IMR-90 (cell line): ENCODE measurements at regions of chr19 and their contacts with region 1.

Region 1: DNA sequence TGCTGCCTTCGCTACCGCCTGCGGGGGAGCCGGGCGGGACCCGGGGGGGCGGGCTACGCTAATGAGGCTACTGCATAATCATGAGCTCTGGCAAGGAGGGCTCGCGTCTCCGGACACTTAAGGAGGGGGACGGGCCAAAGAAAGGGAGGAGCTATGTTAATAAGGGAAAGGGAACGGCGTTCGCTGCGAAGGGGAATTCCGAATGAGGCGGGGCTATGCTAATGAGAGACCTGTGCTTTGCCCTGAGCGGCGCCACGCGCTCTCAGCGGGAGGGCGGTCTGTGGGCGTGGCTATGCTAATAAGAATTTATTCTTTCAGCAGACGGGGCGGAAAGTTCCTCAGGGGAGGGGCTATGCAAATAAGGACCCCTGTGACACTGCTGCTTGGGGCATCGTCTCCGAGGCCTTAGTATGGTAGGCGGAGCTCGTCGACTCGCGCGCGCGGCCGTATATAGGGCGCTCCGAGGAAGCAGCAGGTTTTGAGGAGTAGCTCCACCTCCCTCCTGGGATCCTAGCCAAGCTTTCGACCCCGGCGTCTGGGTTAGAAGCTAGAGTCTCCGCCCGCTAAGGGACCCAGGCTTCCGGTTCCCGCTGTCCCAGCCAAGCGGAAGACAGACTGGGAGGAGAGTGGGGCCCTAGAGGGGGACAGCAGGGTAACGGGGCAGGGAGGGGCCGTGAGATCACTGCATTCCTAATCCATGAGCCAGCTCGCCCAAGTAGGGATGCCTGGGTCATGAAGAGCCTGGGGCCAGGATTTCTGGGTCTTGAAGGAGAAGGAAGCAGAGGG is at the start of gene RRAS:
- DNase-seq: peak; percentile 100
- ATAC-seq: peak; percentile 69
- H3K4me3 ChIP-seq: peak within 1 kb of the TSS; percentile 65
- H3K27ac ChIP-seq: peak within 1 kb of the TSS; percentile 99
- H3K4me1 ChIP-seq: peaks cover 7% of the 10 kb centered on the region
- H3K27me3 ChIP-seq: no peaks in the 10 kb centered on the region
- CTCF ChIP-seq: no peak
- POLR2A ChIP-seq: no peak; the same call in none of the 2 replicates
- RAD21 ChIP-seq: no peak
- total RNA-seq, gene RRAS: 50.2 and 50.5 TPM in 2 replicates

Region 2: DNA sequence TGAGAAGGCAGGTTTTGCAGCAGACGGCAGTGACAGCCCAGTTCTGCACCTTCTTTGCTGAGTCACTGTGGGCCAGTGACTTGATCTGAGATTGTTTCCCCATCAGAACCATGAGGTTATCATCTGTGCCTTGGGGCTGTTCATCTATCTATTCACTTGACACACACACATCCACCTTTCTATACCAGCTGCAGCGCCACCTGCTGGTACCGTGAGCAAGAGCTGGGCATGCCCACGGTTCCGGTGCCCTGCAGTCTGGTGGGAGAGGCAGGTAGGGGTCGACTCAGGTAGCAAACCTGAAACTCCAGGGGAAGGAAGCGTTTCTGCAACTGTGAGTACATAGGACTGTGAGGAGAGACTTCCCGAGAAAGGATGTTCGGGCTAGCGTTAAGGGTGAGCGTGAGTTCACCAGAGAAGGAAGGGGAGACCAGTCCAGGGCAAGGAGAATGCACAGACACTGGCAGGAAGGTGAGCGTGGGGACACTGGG is 533.6 kb before region 1 on chr19:
- CTCF ChIA-PET with region 1: no interaction called
- POLR2A ChIA-PET with region 1: no interaction called
- dilution Hi-C with region 1: no loop called
- in situ Hi-C with region 1: no loop called
- intact Hi-C with region 1: no loop called
- DNase-seq: peak; percentile 45
- ATAC-seq: peak; percentile 57; the same call in 1 of the 2 replicates
- H3K4me3 ChIP-seq: no peak overlapping the region
- H3K27ac ChIP-seq: no peak overlapping the region
- H3K4me1 ChIP-seq: no peaks in the 10 kb centered on the region
- H3K27me3 ChIP-seq: no peaks in the 10 kb centered on the region
- CTCF ChIP-seq: peak; percentile 67
- POLR2A ChIP-seq: no peak
- RAD21 ChIP-seq: peak; percentile 33

Region 3: GRCh38 chr19:49590071-49590970 is 50.0 kb before region 1 on chr19:
- CTCF ChIA-PET with region 1: no interaction called
- POLR2A ChIA-PET with region 1: interaction called, 9 read pairs
- dilution Hi-C with region 1: no loop called
- in situ Hi-C with region 1: no loop called
- intact Hi-C with region 1: loop called (anchors 2 kb)
- DNase-seq: peak; percentile 95
- ATAC-seq: peak; percentile 85
- H3K4me3 ChIP-seq: peak overlapping the region; percentile 97
- H3K27ac ChIP-seq: peak overlapping the region; percentile 91
- H3K4me1 ChIP-seq: peaks cover 7% of the 10 kb centered on the region; the same call in 1 of the 2 replicates
- H3K27me3 ChIP-seq: no peaks in the 10 kb centered on the region
- CTCF ChIP-seq: peak; percentile 10; the same call in 1 of the 2 replicates
- POLR2A ChIP-seq: peak; percentile 72
- RAD21 ChIP-seq: no peak; the same call in 1 of the 2 replicates

Region 4: GRCh38 chr19:49665351-49666119 is 25.2 kb after region 1 on chr19 and contains the starts of genes BCL2L12 and IRF3:
- CTCF ChIA-PET with region 1: interaction called, 4 read pairs
- POLR2A ChIA-PET with region 1: no interaction called
- dilution Hi-C with region 1: no loop called
- in situ Hi-C with region 1: no loop called
- intact Hi-C with region 1: loop called (anchors 1 kb)
- DNase-seq: peak; percentile 93
- ATAC-seq: peak; percentile 91
- H3K4me3 ChIP-seq: peak within 1 kb of the TSS; percentile 77
- H3K27ac ChIP-seq: peak within 1 kb of the TSS; percentile 87
- H3K4me1 ChIP-seq: peaks cover 9% of the 10 kb centered on the region
- H3K27me3 ChIP-seq: no peaks in the 10 kb centered on the region
- CTCF ChIP-seq: no peak
- POLR2A ChIP-seq: peak; percentile 77
- RAD21 ChIP-seq: no peak
- total RNA-seq, gene BCL2L12: 3.9 and 4.7 TPM in 2 replicates
- total RNA-seq, gene IRF3: 37.2 and 39.6 TPM in 2 replicates